Heart right ventricle (tissue), 16 donors: ENCODE measurements at regions of chr3 and their contacts with region 1.

Region 1: GRCh38 chr3:39051647-39052561 is at the starts of genes SCN11A and WDR48:
- DNase-seq: peak; percentile 90 to 97
- ATAC-seq: peak; percentile 99 to 100 (median 99)
- H3K4me3 ChIP-seq: peak within 1 kb of the TSS; percentile 78 to 99 (median 97)
- H3K27ac ChIP-seq: peak within 1 kb of the TSS; percentile 14 to 94 (median 84)
- H3K4me1 ChIP-seq: peaks cover 2 to 39% (median 23%) of the 10 kb centered on the region in 9 donors
- H3K27me3 ChIP-seq: no peaks in the 10 kb centered on the region
- CTCF ChIP-seq: no peak
- total RNA-seq, gene SCN11A: 0.04 to 0.12 (median 0.07) TPM in 8 of 10 donors, not detected in the others
- total RNA-seq, gene WDR48: 14.5 to 37.2 (median 31.0) TPM

Region 2: DNA sequence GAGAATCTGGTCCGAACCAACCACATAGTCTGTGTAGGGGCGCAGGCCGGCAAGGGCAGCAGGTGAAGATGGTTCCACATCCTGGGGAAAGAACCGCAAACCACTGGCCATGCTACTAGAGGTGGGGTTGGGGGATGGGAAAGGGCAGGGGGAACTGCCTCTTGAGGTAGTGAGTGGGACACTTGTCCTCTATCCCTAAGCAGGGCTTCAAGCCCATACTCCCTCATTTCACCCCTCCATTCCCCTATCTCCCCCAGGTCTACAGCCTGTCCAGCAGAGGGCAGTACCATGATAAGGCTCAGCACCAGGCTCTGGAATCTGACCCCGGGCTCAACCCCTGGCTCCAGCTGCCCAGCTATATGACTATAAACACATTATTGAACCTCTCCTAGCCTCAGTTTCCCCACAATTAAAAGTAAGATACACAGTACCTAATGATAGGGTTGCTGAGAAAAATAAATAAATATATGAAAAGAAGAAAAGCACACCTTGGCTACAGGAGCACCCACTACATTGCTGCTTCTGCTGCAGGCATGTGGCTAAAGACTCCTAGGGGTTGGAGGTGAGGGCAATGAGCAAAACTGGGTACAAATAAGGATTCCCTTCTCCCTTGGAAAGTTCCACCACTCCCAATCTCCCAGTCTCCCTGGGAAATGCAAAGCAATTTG is 49.3 kb after region 1 on chr3:
- intact Hi-C with region 1: loop called in 1 of 10 experiments (anchors 5 kb)
- DNase-seq: no peak
- ATAC-seq: peak in 5 of 8 donors; percentile 30 to 58 (median 45)
- H3K4me3 ChIP-seq: no peak overlapping the region
- H3K27ac ChIP-seq: no peak overlapping the region
- H3K4me1 ChIP-seq: peaks cover 22 to 61% (median 40%) of the 10 kb centered on the region in 9 donors
- H3K27me3 ChIP-seq: no peaks in the 10 kb centered on the region
- CTCF ChIP-seq: peak; percentile 28 to 68 (median 61)

Region 3: GRCh38 chr3:40137593-40138295 is 1085.8 kb after region 1 on chr3:
- intact Hi-C with region 1: no loop called
- DNase-seq: no peak
- ATAC-seq: no peak
- H3K4me3 ChIP-seq: no peak overlapping the region
- H3K27ac ChIP-seq: no peak overlapping the region
- H3K4me1 ChIP-seq: no peaks in the 10 kb centered on the region
- H3K27me3 ChIP-seq: no peaks in the 10 kb centered on the region
- CTCF ChIP-seq: no peak